ENCODE measurements at regions of chr19 and their contacts with region 1.

Region 1: DNA sequence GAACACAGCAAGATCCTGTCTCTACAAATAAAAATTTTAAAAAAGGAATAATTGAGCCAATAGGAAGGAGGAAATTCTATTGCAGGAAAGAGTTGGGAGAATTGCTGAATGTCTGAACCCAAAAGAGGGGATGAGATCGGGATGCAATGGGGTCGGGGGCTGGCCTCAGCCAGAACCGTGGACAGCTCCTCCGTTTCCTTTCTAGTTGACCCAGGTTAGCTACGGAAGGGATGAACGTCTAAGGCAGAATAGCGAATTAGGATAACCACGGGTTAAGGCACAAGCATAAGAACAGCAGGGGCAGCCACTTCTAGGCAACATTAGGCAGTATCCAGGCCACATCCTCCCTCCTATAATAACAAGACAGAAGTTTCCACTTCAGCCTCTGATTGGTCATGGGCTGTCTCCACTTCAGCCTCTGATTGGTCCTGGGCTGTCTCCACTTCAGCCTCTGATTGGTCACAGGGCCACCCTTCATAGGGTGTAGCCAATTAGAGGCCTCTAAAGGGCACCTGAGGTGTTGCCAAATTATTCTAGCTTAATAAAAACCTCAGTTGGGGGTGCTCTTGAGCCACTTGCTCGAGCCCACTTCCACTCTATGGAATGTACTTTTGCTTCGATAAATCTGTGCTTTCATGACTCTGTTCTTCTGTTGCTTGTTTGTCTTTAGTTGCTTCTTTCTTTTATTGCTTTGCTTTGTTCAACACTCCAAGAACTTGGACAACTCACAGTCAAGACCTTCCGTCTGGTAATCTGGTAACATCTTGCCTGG is 24.9 kb upstream of the TPM4 start:
- DNase-seq: no peak
- H3K4me3 ChIP-seq: no peak overlapping the region
- H3K27ac ChIP-seq: no peak overlapping the region
- H3K4me1 ChIP-seq: peaks cover 10% of the 10 kb centered on the region
- H3K27me3 ChIP-seq: no peaks in the 10 kb centered on the region
- CTCF ChIP-seq: no peak

Region 2: GRCh38 chr19:15971222-15971780 is 80.1 kb before region 1 on chr19:
- CTCF ChIA-PET with region 1: no interaction called
- POLR2A ChIA-PET with region 1: no interaction called
- intact Hi-C with region 1: no loop called
- DNase-seq: peak in 1 of 2 experiments; percentile 40
- H3K4me3 ChIP-seq: no peak overlapping the region
- H3K27ac ChIP-seq: no peak overlapping the region
- H3K4me1 ChIP-seq: no peaks in the 10 kb centered on the region
- H3K27me3 ChIP-seq: peaks cover 25% of the 10 kb centered on the region; the same call in 1 of the 2 replicates
- CTCF ChIP-seq: peak; percentile 44; the same call in 1 of the 2 replicates

Region 3: DNA sequence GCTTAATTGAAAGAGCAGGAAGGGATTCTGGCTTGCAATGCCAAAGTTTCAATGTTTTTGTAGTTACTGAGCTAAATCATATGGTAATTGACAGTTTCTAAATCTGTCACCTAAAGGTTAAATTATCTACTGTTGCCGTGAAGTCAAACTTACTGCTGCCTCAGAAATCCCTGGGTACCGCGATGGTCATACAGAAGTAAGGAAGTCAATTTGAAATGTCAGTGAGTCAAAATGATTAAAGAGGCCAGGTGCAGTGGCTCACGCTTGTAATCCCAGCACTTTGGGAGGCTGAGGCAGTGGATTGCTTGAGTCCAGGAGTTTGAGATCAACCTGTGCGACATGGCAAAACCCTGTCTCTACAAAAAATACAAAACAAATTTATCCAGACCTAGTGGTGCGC is 23.9 kb before region 1 on chr19:
- CTCF ChIA-PET with region 1: no interaction called
- POLR2A ChIA-PET with region 1: no interaction called
- intact Hi-C with region 1: no loop called
- DNase-seq: no peak
- H3K4me3 ChIP-seq: no peak overlapping the region
- H3K27ac ChIP-seq: no peak overlapping the region
- H3K4me1 ChIP-seq: no peaks in the 10 kb centered on the region
- H3K27me3 ChIP-seq: no peaks in the 10 kb centered on the region
- CTCF ChIP-seq: no peak

Region 4: GRCh38 chr19:16076154-16076957 is 24.9 kb after region 1 on chr19 and contains the start of gene TPM4:
- CTCF ChIA-PET with region 1: interaction called, 11 read pairs
- POLR2A ChIA-PET with region 1: interaction called, 5 read pairs
- intact Hi-C with region 1: no loop called
- DNase-seq: peak; percentile 77 to 92
- H3K4me3 ChIP-seq: peak within 1 kb of the TSS; percentile 70
- H3K27ac ChIP-seq: peak within 1 kb of the TSS; percentile 99
- H3K4me1 ChIP-seq: peaks cover 43% of the 10 kb centered on the region
- H3K27me3 ChIP-seq: no peaks in the 10 kb centered on the region
- CTCF ChIP-seq: no peak
- total RNA-seq, gene TPM4: 279 and 307 TPM in 2 replicates

Region 5: GRCh38 chr19:16084067-16084685 is 32.7 kb after region 1 on chr19:
- CTCF ChIA-PET with region 1: interaction called, 11 read pairs
- POLR2A ChIA-PET with region 1: interaction called, 5 read pairs
- intact Hi-C with region 1: no loop called
- DNase-seq: no peak
- H3K4me3 ChIP-seq: no peak overlapping the region
- H3K27ac ChIP-seq: peak overlapping the region; percentile 14; the same call in 1 of the 2 replicates
- H3K4me1 ChIP-seq: peaks cover 59% of the 10 kb centered on the region
- H3K27me3 ChIP-seq: no peaks in the 10 kb centered on the region
- CTCF ChIP-seq: no peak

Measured in PC-9 (cell line).